PC-3 (cell line): ENCODE measurements at regions of chr15 and their contacts with region 1.

Region 1: DNA sequence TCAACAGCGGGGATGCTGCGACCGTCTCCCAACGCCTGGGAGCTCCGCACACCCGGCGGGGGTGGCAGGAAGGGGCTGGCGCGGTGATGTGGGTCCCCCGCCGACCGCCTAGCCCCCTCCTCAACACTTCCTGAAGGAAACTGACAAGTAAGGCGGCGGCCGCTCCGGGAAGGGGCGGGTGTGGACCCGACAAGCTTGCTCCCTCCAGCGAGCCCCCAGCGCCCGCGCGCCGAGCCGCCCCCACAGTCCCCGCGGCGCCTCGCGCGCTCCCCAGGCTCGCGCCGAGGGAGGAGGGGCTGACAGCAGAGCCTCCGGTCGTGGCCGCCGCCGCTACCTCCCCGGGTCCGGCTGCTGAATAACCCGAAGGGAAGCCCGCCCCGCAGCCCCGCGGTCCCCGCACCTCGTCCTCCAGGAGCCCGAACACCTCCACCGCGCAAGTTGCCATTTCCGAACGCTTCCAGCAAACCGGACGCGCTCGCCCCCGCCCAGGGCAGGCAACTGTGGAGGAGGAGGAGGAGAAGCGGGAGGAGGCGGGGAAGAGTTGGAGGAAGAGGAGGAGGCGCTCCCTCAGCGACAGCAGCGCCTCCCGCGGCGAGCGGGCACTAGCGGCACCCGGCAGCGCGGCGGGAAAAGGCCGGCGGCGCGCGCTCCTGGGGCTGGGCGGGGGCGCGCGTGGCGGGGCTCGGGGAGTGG is at the start of gene NEDD4:
- DNase-seq: peak; percentile 81
- ATAC-seq: peak; percentile 91
- H3K4me3 ChIP-seq: peak within 1 kb of the TSS; percentile 72
- H3K27ac ChIP-seq: peak within 1 kb of the TSS; percentile 23; the same call in 1 of the 2 replicates
- H3K4me1 ChIP-seq: peaks cover 12% of the 10 kb centered on the region
- H3K27me3 ChIP-seq: no peaks in the 10 kb centered on the region
- CTCF ChIP-seq: peak; percentile 28
- total RNA-seq, gene NEDD4: 7.5 and 9.6 TPM in 2 replicates

Region 2: DNA sequence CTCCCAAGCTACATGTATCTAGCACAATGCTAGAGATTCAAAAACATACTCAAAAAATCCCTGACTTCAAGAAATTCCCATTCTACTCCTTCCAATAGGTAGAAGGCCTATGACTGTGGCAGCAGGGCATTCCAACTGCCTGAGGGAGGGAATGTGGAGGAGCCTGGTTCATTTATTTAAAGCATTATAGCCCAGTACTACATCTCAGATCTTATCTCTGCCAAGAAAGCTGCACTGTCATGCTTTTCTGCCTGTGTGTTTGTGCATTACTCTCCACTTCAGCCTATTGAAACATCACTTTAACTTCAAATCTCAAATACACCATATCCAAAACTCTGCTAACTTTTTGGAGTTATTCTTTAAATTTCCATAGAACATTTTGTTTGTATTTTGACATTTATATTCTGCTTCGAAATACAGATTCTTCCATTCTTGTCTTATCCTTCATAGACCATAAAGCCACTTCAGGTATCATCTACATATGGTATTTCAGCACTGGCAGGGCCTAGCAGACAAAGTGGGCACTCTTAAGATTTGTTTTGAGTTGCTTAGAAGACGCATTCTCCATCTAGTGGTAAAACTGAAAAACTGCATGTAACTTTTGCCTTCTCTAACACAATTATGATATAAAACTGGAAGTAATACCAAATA is 59.3 kb after region 1 on chr15:
- CTCF ChIA-PET with region 1: no interaction called
- POLR2A ChIA-PET with region 1: interaction called, 4 read pairs
- intact Hi-C with region 1: loop called (anchors 1 kb)
- DNase-seq: peak; percentile 67
- ATAC-seq: peak; percentile 64
- H3K4me3 ChIP-seq: no peak overlapping the region
- H3K27ac ChIP-seq: no peak overlapping the region
- H3K4me1 ChIP-seq: peaks cover 1% of the 10 kb centered on the region; the same call in 1 of the 2 replicates
- H3K27me3 ChIP-seq: no peaks in the 10 kb centered on the region
- CTCF ChIP-seq: peak; percentile 76

Region 3: GRCh38 chr15:56058986-56059385 is 65.7 kb after region 1 on chr15:
- CTCF ChIA-PET with region 1: no interaction called
- POLR2A ChIA-PET with region 1: interaction called, 14 read pairs
- intact Hi-C with region 1: no loop called
- DNase-seq: no peak
- ATAC-seq: no peak
- H3K4me3 ChIP-seq: no peak overlapping the region
- H3K27ac ChIP-seq: no peak overlapping the region
- H3K4me1 ChIP-seq: peaks cover 19% of the 10 kb centered on the region
- H3K27me3 ChIP-seq: no peaks in the 10 kb centered on the region
- CTCF ChIP-seq: no peak

Region 4: DNA sequence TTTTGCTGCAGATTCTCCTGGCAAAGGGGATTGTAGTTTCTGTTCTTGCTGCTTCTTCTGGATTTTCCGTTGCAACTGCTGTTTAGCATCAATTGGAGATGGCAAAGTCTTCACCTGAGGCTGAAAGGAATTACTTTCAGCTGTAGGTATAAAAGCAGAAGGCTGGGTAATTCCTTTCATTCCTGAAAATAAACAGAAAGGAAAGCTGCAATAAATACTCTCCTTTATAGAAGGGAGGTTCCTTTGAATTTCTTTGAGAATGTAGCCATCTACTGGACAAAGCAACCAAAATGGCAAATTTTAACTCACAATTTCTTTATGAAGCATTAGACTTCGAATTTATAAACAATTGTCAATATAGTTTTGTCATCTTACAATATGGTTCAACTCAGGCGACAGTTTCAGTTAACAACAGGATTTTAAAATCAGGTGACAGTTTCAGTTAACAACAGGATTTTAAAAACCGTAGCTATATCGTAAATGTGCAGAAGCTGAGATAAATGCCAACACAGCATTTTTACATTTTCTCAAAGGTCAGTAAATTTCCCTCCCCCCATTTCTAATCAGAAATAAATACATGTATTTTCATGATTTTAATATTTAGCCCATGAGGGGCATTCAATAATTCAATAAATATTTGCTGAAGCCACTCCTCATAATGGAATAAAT is 105.1 kb after region 1 on chr15:
- CTCF ChIA-PET with region 1: no interaction called
- POLR2A ChIA-PET with region 1: no interaction called
- intact Hi-C with region 1: loop called (anchors 2 kb)
- DNase-seq: peak; percentile 32
- ATAC-seq: no peak
- H3K4me3 ChIP-seq: no peak overlapping the region
- H3K27ac ChIP-seq: no peak overlapping the region
- H3K4me1 ChIP-seq: no peaks in the 10 kb centered on the region
- H3K27me3 ChIP-seq: no peaks in the 10 kb centered on the region
- CTCF ChIP-seq: peak; percentile 52; the same call in 1 of the 2 replicates